SK-MEL-5 (cell line): ENCODE measurements at regions of chr14 and their contacts with region 1.

Region 1: GRCh38 chr14:47555333-47555732 is 120.1 kb downstream of the MDGA2 start:
- DNase-seq: no peak

Region 2: DNA sequence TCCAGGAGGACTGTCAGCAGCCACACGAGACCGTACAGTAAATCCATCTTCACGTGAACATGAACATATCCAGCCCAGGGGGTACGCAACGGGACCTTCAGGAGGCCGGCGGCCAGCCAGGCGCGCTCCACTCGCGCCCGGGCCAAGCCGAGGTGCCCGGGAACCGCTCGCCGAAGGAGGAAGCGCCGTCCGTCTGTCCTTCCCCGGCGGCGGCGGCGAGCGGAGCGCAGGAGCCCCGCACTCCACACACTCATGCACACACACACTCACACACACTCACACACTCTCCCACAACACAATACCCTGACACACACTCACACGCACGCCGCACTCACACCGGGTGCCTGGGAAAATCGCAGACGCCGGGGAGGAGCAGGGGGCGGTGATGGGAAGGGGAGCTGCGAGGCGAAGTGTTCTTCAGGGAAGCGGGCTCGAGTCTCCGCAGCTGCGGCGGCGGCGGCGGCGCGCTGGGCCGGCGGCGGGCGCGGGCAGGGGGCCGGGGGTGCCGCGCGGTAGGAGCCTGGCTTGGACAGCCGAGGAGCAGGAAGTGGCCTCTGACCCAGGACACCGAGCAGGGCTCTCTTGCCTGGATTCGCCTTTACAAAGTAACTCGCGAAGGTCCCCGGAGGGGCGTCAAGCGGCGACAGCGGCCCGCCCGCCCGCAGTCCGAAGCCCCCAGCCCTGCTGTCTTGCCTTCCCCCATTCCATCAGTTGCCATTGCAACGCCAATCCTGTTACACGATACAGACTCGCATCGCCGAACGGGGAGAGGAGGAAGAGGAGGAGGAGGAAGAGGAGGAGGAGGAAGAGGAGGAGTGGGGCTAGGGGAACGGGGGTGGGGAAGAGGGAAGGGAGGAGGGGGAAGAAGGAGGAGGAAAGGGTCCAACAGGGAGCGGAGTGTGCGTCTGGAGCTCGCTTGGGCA is 119.5 kb after region 1 on chr14:
- in situ Hi-C with region 1: loop called (anchors 25 kb)
- DNase-seq: peak; percentile 40